ENCODE measurements at regions of chr9 and their contacts with region 1.

Region 1: DNA sequence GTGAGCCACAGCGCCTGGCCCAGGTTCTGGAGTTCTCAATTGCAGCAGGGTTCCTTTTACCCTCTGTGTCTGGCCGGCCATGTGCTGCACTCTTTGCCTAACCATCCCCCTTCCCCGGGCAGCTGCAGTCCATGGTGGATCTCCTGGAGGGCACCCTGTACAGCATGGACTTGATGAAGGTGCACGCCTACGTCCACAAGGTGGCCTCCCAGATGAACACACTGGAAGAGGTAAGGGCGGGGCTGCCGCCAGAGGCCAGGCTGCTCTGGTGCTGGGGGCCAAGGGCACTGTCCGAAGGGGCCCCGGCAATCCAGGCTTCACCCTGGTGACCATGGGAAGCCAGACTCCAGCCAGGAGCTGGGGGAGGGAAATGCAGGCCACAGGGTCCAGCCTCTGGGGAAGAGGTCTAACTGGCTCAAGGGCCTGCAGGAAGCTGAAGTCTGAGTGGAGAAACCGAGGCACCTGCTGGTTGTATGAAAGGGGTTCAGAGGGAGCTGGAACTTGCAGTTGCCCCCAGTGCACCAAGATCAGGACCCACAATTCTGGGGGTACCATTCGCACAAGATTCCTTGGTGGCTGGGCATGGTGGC is 18.1 kb downstream of the OLFML2A start:
- DNase-seq: no peak
- H3K4me3 ChIP-seq: no peak overlapping the region
- H3K27ac ChIP-seq: no peak overlapping the region
- H3K4me1 ChIP-seq: no peaks in the 10 kb centered on the region
- H3K27me3 ChIP-seq: no peaks in the 10 kb centered on the region
- CTCF ChIP-seq: peak in 1 of 2 donors; percentile 40

Region 2: DNA sequence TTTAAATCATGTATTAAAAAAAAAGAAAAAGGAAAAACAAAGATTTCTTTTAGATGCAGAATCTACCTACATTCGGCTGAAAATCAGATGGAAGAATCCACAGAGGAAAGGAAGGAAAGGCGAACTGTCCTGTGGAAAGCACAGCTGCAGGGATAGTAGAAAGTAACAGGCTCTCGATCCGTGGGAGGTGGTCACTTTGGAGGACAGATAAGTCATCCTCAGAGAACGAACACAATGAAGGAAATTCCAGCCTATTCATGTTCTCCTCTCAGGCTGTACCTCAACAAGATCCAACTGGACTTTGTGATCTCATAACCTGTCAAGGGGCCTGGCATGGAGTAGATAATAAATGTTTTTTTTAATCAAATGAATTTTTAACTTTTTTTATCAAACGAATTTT is 96.7 kb before region 1 on chr9:
- CTCF ChIA-PET with region 1: no interaction called
- dilution Hi-C with region 1: no loop called
- in situ Hi-C with region 1: no loop called
- intact Hi-C with region 1: no loop called
- DNase-seq: peak; percentile 92
- H3K4me3 ChIP-seq: peak overlapping the region; percentile 29 to 57 (median 40)
- H3K27ac ChIP-seq: peak overlapping the region; percentile 89
- H3K4me1 ChIP-seq: peaks cover 33% of the 10 kb centered on the region
- H3K27me3 ChIP-seq: no peaks in the 10 kb centered on the region
- CTCF ChIP-seq: no peak

Region 3: GRCh38 chr9:124839612-124840299 is 44.8 kb after region 1 on chr9:
- CTCF ChIA-PET with region 1: no interaction called
- dilution Hi-C with region 1: loop called (anchors 5 kb)
- in situ Hi-C with region 1: no loop called
- intact Hi-C with region 1: no loop called
- DNase-seq: no peak
- H3K4me3 ChIP-seq: no peak overlapping the region
- H3K27ac ChIP-seq: no peak overlapping the region
- H3K4me1 ChIP-seq: peaks cover 8% of the 10 kb centered on the region
- H3K27me3 ChIP-seq: no peaks in the 10 kb centered on the region
- CTCF ChIP-seq: peak; percentile 50 to 54

Measured in mammary epithelial cell (primary cell).